Prostate gland (tissue), 2 donors: ENCODE measurements at regions of chr6 and their contacts with region 1.

Region 1: GRCh38 chr6:56708810-56709597 is 66.3 kb upstream of the DST start:
- DNase-seq: no peak
- H3K4me3 ChIP-seq: no peak overlapping the region
- H3K27ac ChIP-seq: no peak overlapping the region
- H3K4me1 ChIP-seq: no peaks in the 10 kb centered on the region
- H3K27me3 ChIP-seq: no peaks in the 10 kb centered on the region
- CTCF ChIP-seq: peak; percentile 41 to 74 (median 64)
- POLR2A ChIP-seq: no peak

Region 2: DNA sequence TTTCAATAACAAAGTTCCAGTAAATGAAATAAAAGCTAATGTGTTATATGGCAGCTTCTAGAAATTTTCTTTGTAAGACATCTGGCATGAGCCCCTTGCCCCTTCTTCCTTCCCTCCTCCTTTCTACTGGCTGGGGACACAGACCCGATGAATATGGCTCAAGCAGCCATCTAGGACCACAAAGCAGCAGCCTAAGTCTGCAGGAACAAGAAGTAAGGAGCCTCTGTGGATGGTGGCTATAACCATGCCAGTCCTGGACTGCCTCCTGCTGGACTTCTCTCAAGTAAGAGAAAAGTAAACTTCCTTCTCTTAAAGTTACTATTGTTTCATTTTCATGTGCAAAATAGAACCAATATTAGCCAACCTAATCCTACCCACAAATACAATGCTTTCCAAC is 48.6 kb after region 1 on chr6:
- intact Hi-C with region 1: loop called (anchors 5 kb)
- DNase-seq: peak; percentile 35
- H3K4me3 ChIP-seq: no peak overlapping the region
- H3K27ac ChIP-seq: no peak overlapping the region
- H3K4me1 ChIP-seq: no peaks in the 10 kb centered on the region
- H3K27me3 ChIP-seq: no peaks in the 10 kb centered on the region
- CTCF ChIP-seq: peak in 2 of 4 experiments; percentile 34 to 53
- POLR2A ChIP-seq: no peak

Region 3: DNA sequence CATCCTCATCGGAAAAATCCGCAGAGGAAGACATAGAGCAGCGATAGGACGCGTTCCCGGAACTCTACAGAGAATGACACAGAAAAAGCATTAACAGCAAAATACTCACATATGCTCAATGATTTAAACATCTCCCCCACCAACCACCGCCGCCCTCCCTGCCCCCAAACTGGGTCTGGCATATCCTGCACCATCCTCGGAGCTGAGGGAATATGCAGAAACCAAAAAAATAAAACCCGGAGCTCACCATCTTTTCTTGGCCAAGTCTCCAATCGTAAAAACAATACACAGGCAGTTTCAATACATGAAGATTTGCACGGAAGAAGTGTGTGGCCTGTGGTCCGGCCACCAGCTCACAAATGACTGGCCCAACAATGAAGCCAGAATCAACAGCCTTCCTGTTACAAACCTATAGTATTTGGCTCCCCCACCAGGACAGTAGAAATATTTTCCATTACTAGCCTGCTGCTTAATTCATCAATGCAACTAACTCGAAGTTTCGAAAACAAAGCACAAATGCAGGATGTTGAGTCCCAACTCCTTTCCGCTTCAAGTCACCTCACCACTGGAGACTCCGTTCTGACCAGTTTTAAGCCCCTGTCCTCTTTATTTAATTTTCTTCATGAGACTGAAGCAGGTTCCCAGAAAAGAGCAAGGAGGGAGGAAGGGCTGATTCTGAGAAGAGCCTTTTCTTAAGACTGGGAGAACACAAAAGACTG is 142.7 kb after region 1 on chr6:
- intact Hi-C with region 1: loop called (anchors 2 kb)
- DNase-seq: peak; percentile 18
- H3K4me3 ChIP-seq: peak overlapping the region; percentile 13 to 25
- H3K27ac ChIP-seq: no peak overlapping the region
- H3K4me1 ChIP-seq: no peaks in the 10 kb centered on the region
- H3K27me3 ChIP-seq: no peaks in the 10 kb centered on the region
- CTCF ChIP-seq: peak in 3 of 4 experiments; percentile 32 to 59 (median 54)
- POLR2A ChIP-seq: no peak